ENCODE measurements at regions of chr13 and their contacts with region 1.

Region 1: DNA sequence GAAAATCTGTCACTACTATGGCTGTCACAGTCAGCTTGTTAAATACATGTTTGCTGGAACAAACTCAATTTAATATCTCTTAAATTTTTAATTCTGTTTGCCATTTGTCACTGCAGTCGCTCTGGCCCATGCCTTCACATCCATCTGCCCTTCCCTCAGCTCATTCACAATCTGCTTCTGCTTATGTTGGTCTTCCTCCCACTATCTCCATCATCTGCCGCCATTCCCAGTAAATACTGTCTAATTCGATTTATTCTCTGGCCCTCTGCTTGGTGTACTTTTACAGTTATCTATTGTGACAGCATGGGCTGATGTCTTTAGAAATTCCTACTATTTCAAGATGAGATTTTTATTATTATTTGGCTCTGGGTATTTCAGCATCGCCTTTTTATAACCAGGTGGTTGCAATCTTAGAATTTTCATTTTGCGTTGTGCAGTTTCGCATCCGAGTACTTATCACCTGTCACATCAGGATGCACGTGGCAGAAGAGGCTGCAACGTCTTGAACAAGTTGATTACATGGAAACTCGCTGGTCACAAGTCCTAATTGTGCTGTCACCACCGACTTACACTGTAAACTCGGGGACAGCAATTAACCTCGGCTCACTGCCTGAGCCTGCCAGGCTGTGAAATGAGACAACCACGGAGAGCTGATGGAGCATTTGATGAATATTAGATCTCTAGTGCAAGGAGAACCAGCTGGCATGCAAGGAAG is 158.4 kb downstream of the MYO16 start:
- DNase-seq: no peak
- H3K4me3 ChIP-seq: no peak overlapping the region
- CTCF ChIP-seq: no peak

Region 2: GRCh38 chr13:108681986-108682575 is 105.8 kb before region 1 on chr13:
- in situ Hi-C with region 1: no loop called
- DNase-seq: no peak
- H3K4me3 ChIP-seq: no peak overlapping the region
- CTCF ChIP-seq: no peak

Region 3: GRCh38 chr13:108859202-108860012 is 71.5 kb after region 1 on chr13:
- in situ Hi-C with region 1: loop called (anchors 5 kb)
- DNase-seq: peak; percentile 43
- H3K4me3 ChIP-seq: no peak overlapping the region
- CTCF ChIP-seq: no peak